Calu3 (cell line): ENCODE measurements at regions of chr6 and their contacts with region 1.

Region 1: DNA sequence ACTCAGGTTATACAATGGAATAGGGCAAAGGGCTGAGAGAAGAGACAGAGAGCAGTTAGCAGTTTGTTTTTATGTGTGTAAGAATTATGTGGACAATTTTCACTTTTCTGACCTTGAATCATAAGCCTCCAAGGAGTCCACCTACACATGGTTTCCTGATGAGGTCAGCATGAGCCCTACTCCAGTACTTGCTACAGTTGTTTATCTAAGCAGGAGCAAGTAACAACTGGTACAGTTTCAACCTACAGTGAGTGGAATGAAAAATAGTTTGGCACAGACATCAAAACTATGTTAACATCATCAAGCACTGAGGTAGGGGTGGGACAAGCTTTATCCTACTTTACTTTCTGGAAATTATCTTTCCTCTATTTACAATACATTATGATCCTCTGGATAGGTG is 426.7 kb upstream of the ID4 start:
- DNase-seq: peak; percentile 21
- H3K4me3 Mint-ChIP-seq: no peak overlapping the region
- H3K27ac Mint-ChIP-seq: no peak overlapping the region
- H3K4me1 Mint-ChIP-seq: peaks cover 20% of the 10 kb centered on the region
- H3K27me3 Mint-ChIP-seq: no peaks in the 10 kb centered on the region
- CTCF ChIP-seq: no peak

Region 2: GRCh38 chr6:19444481-19444880 is 34.0 kb after region 1 on chr6:
- CTCF ChIA-PET with region 1: no interaction called
- intact Hi-C with region 1: loop called (anchors 2 kb)
- DNase-seq: no peak
- H3K4me3 Mint-ChIP-seq: no peak overlapping the region
- H3K27ac Mint-ChIP-seq: no peak overlapping the region
- H3K4me1 Mint-ChIP-seq: peaks cover 22% of the 10 kb centered on the region
- H3K27me3 Mint-ChIP-seq: no peaks in the 10 kb centered on the region
- CTCF ChIP-seq: no peak

Region 3: DNA sequence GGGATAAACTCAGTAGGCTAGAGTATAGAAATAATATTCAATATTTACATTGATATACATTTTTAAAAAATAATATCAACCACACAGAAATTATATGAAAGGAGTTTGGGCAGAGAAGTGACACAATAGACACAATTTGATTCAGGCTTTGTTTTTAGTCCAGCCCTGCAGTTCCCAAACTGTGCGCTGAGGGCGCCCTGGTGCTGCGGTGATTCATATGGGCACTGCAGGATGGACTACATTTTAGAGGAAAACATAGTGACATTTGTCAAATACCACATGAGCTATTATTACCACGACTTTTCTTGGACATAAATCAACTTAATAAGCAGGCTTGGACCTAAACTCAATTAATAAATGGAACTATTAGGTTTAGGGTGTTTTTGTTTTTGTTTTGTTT is 62.4 kb after region 1 on chr6:
- CTCF ChIA-PET with region 1: no interaction called
- intact Hi-C with region 1: loop called (anchors 1 kb)
- DNase-seq: peak; percentile 27
- H3K4me3 Mint-ChIP-seq: no peak overlapping the region
- H3K27ac Mint-ChIP-seq: no peak overlapping the region
- H3K4me1 Mint-ChIP-seq: peaks cover 9% of the 10 kb centered on the region
- H3K27me3 Mint-ChIP-seq: no peaks in the 10 kb centered on the region
- CTCF ChIP-seq: peak; percentile 35

Region 4: GRCh38 chr6:19804205-19805123 is 394.0 kb after region 1 on chr6:
- CTCF ChIA-PET with region 1: no interaction called
- intact Hi-C with region 1: loop called (anchors 10 kb)
- DNase-seq: peak; percentile 98
- H3K4me3 Mint-ChIP-seq: peak overlapping the region; percentile 82
- H3K27ac Mint-ChIP-seq: peak overlapping the region; percentile 89
- H3K4me1 Mint-ChIP-seq: peaks cover 43% of the 10 kb centered on the region
- H3K27me3 Mint-ChIP-seq: no peaks in the 10 kb centered on the region
- CTCF ChIP-seq: no peak